ENCODE measurements at regions of chr1 and their contacts with region 1.

Region 1: GRCh38 chr1:204398217-204399081 is 13.2 kb downstream of the PPP1R15B start:
- DNase-seq: no peak
- ATAC-seq: peak; percentile 97
- H3K4me3 Mint-ChIP-seq: no peak overlapping the region
- H3K27ac Mint-ChIP-seq: peak overlapping the region; percentile 77
- H3K4me1 Mint-ChIP-seq: peaks cover 3% of the 10 kb centered on the region
- H3K27me3 Mint-ChIP-seq: no peaks in the 10 kb centered on the region
- CTCF ChIP-seq: peak; percentile 40

Region 2: DNA sequence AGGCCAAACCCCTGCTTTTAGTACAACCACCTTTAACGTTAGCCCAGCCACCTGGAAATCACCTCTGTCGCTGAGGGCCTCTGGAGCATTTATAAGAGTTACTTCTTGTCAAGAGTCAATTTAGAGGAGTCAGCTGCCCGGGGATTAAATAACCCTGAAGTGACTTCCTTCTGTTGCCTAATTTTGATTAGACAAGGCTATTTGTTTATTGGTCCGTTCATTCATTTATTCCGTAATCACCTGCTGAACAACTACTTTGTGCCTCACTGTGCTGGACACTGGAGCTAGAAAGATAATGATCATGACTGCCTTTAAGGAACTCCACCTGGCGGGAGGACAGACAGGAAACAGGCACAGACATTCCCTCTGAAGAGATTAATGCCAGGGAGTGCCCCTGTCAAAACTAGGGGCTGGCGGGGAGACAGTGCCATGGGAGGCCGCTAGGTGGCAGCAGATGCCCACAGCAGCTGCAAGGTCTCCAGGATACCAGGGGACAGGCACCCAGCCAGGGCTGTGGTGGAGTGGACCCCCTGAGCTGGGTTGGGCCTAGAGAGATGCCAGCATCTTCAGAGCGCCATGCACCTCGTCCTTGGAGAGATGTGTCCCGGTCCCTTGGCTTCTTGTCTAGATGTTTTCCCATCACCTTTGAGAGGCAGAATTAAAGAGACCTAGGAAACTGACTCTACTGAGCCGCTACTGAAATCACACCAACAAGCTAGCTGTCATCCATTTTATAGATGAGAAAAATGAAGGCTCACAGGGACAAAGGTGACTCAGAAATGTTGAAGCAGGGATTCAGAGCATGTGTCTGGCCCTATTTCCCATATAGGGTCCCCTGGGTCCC is 236.0 kb before region 1 on chr1:
- CTCF ChIA-PET with region 1: interaction called, 36 read pairs
- POLR2A ChIA-PET with region 1: no interaction called
- intact Hi-C with region 1: loop called (anchors 1 kb)
- DNase-seq: peak; percentile 71
- ATAC-seq: peak; percentile 98
- H3K4me3 Mint-ChIP-seq: no peak overlapping the region
- H3K27ac Mint-ChIP-seq: no peak overlapping the region
- H3K4me1 Mint-ChIP-seq: no peaks in the 10 kb centered on the region
- H3K27me3 Mint-ChIP-seq: peaks cover 20% of the 10 kb centered on the region
- CTCF ChIP-seq: peak; percentile 60

Region 3: DNA sequence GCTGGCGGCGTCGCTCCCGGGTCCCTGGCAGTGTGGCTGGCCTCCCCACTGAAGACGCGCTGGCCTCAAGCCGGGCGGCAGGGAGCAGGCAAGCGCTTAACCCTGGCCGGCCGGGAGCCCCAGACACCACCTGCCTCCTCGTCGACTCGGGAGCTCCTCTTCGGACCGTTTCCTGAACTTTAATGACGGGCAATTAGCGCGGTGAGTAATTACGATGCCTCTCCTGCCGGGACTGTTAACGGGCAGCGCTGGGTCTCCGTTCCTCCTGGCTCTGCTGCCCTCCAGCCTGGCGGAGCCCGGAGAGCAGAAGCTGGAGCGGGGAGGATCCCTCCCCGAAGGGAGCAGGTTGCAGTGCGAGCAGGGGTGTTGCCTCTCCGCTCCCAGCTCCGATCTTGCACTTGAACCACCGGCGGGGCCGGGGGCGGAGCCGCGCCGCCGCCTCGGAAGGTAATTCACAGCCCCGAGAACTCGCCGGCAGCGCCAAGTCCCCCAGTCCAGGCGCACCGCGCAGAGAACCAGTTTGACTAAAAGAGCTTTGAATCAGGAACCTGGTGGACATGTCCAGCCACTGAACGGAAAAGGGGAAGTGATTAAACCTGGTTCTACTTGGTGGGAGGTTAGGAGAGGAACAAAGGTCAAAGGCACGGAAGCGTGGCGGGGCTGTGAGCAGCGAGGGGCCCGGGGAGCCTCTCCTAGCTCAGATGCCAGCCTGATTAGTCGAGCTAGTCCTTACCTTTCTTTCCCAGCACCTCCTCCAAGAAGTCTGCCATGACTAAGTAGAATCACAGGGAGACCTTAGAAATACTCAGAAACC is 20.4 kb before region 1 on chr1:
- CTCF ChIA-PET with region 1: interaction called, 23 read pairs
- POLR2A ChIA-PET with region 1: interaction called, 7 read pairs
- intact Hi-C with region 1: no loop called
- DNase-seq: peak; percentile 33
- ATAC-seq: peak; percentile 79
- H3K4me3 Mint-ChIP-seq: peak overlapping the region; percentile 79
- H3K27ac Mint-ChIP-seq: no peak overlapping the region
- H3K4me1 Mint-ChIP-seq: peaks cover 13% of the 10 kb centered on the region
- H3K27me3 Mint-ChIP-seq: peaks cover 17% of the 10 kb centered on the region
- CTCF ChIP-seq: no peak

Region 4: DNA sequence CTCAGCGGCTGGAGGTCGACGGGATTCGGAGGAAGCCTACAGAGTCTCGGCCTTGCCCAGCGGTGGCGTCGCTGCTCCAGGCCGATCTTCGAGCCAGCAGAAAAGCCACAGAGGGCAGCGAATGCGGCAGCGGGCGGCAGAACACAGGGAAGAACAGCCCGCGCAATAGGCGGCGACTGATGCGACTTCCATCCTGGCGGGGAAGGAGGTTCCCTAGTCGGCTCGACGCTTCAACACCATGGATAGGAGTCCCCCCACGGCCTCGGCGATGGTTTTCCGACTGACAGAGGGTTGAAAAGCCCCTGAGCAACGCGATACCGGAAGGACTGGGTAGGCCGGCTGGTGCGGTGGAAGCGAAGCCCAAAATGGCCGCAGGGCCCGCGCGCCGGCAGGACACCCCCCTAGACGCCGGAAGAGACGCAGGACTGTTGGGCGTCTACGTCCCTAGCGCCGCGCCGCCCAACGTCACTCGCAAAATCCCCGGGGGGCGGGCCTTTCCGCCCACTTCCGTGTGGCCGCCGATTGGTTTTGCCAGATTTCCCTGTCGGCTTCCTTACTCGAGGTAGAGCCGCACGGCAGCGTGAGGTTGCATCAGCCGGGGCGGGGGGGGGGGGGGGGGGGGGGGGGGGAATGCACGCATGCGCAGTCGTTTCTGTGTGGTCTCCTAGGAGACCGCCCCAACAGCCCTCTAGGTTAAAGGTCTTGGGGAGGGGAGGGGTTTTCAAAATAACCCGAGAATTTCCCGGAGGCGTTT is 13.2 kb after region 1 on chr1 and contains the start of gene PPP1R15B:
- CTCF ChIA-PET with region 1: interaction called, 24 read pairs
- POLR2A ChIA-PET with region 1: interaction called, 6 read pairs
- intact Hi-C with region 1: loop called (anchors 1 kb)
- DNase-seq: peak; percentile 96
- ATAC-seq: peak; percentile 89
- H3K4me3 Mint-ChIP-seq: peak within 1 kb of the TSS; percentile 99
- H3K27ac Mint-ChIP-seq: peak within 1 kb of the TSS; percentile 99
- H3K4me1 Mint-ChIP-seq: peaks cover 29% of the 10 kb centered on the region
- H3K27me3 Mint-ChIP-seq: no peaks in the 10 kb centered on the region
- CTCF ChIP-seq: no peak
- total RNA-seq, gene PPP1R15B: 60.4 and 70.6 TPM in 2 replicates

Region 5: DNA sequence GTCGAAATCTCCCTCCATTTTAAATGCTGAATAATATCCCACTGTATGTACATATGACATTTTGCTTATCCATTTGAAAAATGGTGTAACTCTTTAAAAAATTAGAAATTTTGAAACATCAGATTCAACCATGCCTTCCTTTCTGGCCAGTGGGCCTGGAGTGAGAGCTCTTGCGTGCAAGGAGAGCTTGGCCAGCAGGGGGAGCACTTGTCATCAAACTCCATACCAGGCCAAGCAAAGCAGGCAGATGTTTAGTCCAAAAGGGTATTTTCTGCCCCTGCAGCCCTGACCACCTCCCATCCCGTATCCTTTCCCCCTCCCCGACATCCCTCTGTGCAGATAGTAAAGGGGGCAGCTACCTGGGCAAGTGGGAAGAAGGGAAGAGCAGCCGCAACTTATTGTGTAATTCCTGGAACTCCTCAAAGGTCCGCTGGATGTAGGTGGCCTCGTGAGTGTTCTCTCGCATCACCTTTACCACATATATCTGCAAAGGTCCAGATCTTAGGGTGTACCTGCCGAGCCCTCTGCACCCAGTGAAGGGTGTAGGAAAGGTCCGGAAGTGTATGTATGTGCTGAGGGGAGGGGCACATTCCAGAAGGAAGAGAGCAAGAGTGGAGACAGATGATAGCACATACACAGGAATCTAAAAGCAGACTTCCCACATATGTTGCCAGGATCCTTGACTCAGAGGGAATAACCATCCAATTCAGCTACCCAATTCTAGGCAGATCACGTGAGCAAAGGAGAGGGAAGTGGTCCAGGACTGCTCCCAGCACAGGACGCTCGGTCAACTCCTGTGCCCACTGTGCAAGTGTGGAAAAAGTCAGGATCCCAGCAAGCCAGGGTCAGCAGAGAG is 33.1 kb after region 1 on chr1:
- CTCF ChIA-PET with region 1: interaction called, 10 read pairs
- POLR2A ChIA-PET with region 1: no interaction called
- intact Hi-C with region 1: no loop called
- DNase-seq: peak; percentile 70
- ATAC-seq: peak; percentile 87
- H3K4me3 Mint-ChIP-seq: no peak overlapping the region
- H3K27ac Mint-ChIP-seq: peak overlapping the region; percentile 41
- H3K4me1 Mint-ChIP-seq: peaks cover 5% of the 10 kb centered on the region
- H3K27me3 Mint-ChIP-seq: no peaks in the 10 kb centered on the region
- CTCF ChIP-seq: peak; percentile 40